ENCODE measurements at regions of chr1 and their contacts with region 1.

Region 1: DNA sequence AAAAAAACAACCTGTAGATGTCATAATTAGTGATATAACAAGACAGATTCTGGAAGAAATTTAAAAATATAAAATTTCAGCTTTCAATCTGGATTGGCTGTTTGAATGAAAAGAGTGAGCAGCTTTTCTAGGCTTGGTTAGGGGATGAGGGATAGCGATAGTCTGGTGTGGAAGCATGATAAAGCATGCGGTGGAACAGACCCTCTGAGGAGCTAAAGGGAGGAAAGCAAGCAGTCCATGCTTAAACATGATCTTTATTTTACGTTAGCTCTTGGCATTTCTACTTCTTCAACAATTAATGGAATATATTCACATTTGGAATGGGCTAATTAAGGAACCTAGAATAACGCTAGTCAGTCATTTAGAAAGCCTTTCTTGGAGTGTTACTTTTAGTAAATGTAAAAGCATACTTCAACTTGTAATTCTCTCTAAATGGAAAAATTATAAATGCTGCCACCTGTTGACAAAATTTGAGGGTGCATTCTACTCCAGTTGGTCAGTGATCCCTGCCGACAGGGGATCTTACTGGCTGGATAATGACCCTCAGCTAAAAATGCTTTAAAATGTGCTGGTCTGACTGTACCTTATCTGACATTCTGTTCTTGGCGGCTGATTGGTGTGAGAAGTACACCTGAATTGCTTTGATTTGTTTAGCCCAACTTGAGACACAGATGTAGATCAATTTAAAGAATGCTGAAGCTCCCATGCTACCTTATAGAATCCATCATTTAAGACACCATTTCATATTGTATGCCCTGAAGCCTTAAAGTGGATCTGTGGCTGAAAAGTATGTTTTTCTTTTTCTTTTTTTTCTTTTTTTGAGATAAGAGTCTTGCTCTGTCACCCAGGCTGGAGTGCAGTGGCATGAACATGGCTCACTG is 61.2 kb downstream of the AK4 start:
- DNase-seq: peak; percentile 38
- ATAC-seq: peak; percentile 68
- H3K4me3 ChIP-seq: no peak overlapping the region
- H3K27ac ChIP-seq: peak overlapping the region; percentile 43
- H3K4me1 ChIP-seq: peaks cover 30% of the 10 kb centered on the region
- H3K27me3 ChIP-seq: no peaks in the 10 kb centered on the region
- CTCF ChIP-seq: peak; percentile 56
- EP300 ChIP-seq: no peak
- POLR2A ChIP-seq: no peak
- RAD21 ChIP-seq: 0 out of 2 replicates have a peak, but pooled peaks have one; percentile 34

Region 2: DNA sequence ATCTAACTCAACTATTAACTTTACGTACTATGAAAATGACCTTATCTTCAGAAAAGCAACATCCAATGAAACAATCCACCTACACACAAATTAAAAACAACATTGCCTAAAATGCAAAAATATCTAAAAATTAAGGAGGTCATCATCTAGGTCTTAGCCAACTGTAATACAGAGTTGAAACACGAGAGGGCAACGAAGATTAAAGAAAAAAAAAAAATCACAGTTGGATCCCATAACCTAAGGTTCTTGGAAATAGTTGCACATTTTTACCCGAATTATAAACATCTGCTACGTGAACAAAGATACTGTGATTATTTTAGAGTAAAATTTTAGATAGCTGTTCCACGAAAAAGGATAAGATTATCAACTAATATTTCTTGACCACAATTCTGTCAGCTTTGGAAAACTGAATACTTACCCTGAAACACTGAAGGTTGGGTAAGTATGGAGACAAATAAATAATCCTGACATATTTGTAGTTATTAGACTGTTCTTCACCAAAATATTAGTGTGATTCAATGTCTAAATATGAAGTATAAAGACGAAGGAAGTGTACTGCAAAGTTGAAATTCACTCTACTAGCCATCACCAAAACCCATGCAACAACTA is 149.2 kb before region 1 on chr1:
- CTCF ChIA-PET with region 1: interaction called, 10 read pairs
- POLR2A ChIA-PET with region 1: no interaction called
- in situ Hi-C with region 1: loop called (anchors 5 kb)
- intact Hi-C with region 1: loop called (anchors 1 kb)
- DNase-seq: peak; percentile 17
- ATAC-seq: 0 out of 3 replicates have a peak, but pooled peaks have one; percentile 25
- H3K4me3 ChIP-seq: no peak overlapping the region
- H3K27ac ChIP-seq: no peak overlapping the region
- H3K4me1 ChIP-seq: no peaks in the 10 kb centered on the region
- H3K27me3 ChIP-seq: no peaks in the 10 kb centered on the region
- CTCF ChIP-seq: peak; percentile 48
- EP300 ChIP-seq: no peak
- POLR2A ChIP-seq: no peak
- RAD21 ChIP-seq: peak; percentile 47; the same call in 1 of the 2 replicates

Region 3: GRCh38 chr1:65067491-65068201 is 141.6 kb before region 1 on chr1:
- CTCF ChIA-PET with region 1: interaction called, 5 read pairs
- POLR2A ChIA-PET with region 1: no interaction called
- in situ Hi-C with region 1: loop called (anchors 5 kb)
- intact Hi-C with region 1: no loop called
- DNase-seq: peak; percentile 29
- ATAC-seq: peak; percentile 49
- H3K4me3 ChIP-seq: peak overlapping the region; percentile 64 to 84 (median 74)
- H3K27ac ChIP-seq: peak overlapping the region; percentile 26
- H3K4me1 ChIP-seq: peaks cover 14% of the 10 kb centered on the region; the same call in 1 of the 2 replicates
- H3K27me3 ChIP-seq: peaks cover 0 to 8% of the 10 kb centered on the region in 2 experiments; a peak in 2 of 5 replicates
- CTCF ChIP-seq: no peak
- EP300 ChIP-seq: no peak
- POLR2A ChIP-seq: peak in 1 of 2 experiments; percentile 54; a peak in 2 of 4 replicates
- RAD21 ChIP-seq: no peak

Region 4: DNA sequence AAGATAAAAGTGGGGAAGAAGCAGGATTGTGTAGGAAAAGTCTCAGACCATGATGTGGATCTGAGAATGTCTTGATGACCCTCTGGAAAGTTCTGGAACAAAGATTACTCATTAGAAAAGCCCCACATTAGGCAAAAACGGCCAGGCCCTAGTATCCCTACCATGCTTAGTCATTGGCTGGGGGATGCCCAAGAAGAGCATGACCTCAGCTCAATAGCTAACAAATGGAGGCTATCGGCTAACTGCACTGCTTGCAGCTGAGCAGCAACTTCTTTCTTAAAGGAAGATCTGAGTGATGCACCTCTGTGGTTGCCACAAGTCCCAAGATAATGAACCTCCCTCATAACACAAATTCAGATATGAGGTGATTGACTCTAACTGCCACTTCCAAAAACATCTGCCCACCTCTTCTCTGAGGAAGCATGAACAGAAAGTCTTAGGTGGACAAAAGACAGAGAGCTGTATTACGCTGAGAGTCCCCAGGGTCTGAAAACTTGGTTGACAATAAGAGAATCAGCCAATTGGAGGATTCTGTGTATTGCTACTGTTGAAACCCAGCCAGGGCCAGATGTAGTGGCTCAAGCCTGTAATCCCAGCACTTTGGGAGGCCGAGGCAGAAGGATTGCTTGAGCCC is 125.9 kb before region 1 on chr1:
- CTCF ChIA-PET with region 1: no interaction called
- POLR2A ChIA-PET with region 1: no interaction called
- in situ Hi-C with region 1: no loop called
- intact Hi-C with region 1: loop called (anchors 5 kb)
- DNase-seq: no peak
- ATAC-seq: no peak
- H3K4me3 ChIP-seq: no peak overlapping the region
- H3K27ac ChIP-seq: no peak overlapping the region
- H3K4me1 ChIP-seq: no peaks in the 10 kb centered on the region; the same call in 1 of the 2 replicates
- H3K27me3 ChIP-seq: no peaks in the 10 kb centered on the region
- CTCF ChIP-seq: no peak
- EP300 ChIP-seq: no peak
- POLR2A ChIP-seq: no peak
- RAD21 ChIP-seq: no peak

Region 5: DNA sequence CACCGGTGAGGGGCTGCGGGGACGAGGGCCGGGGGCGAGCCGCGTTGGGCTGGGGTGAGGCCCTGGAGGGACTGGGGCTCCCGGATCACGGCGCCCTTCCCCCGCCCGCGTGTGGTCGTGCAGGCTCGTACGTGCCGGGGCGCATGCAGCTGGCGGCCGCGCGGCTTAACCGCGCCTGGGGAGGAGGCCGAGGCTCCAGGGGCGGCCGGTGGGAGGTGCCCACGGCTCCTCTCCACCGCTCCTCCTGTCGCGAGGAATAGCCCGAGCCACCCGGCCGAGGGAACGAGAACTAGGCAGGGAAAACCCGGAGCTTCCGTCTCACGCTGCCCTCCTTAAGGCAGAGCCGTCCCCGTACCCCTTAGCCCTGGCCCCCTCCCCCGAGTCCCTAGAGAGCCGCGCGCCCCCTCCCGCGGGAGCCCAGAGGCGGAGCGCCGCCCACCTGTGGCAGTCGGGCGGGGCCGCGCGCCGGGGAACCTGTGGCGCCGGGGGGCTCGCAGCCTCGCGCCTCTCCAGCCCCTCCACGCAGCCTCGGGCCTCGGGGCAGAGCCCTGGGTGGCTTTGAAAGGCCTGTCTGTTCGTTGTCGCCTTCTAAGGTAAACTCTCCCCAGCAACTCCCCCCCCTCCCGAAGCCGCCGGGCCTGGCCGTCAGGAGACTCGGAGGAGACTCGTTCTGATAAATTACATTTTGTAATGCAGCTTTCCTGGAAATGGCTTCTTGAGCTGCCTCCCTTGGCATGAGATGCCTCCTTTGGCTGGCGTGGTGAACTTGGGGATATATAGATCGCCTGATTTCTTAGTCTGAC is 60.5 kb before region 1 on chr1:
- CTCF ChIA-PET with region 1: no interaction called
- POLR2A ChIA-PET with region 1: no interaction called
- in situ Hi-C with region 1: loop called (anchors 5 kb)
- intact Hi-C with region 1: loop called (anchors 2 kb)
- DNase-seq: no peak
- ATAC-seq: peak; percentile 41
- H3K4me3 ChIP-seq: peak overlapping the region; percentile 75 to 90 (median 86)
- H3K27ac ChIP-seq: peak overlapping the region; percentile 78
- H3K4me1 ChIP-seq: peaks cover 69% of the 10 kb centered on the region
- H3K27me3 ChIP-seq: no peaks in the 10 kb centered on the region; a peak in 1 of 5 replicates
- CTCF ChIP-seq: 0 out of 2 replicates have a peak, but pooled peaks have one; percentile 3
- EP300 ChIP-seq: no peak
- POLR2A ChIP-seq: peak in 1 of 2 experiments; percentile 49; a peak in 2 of 4 replicates
- RAD21 ChIP-seq: no peak; the same call in 1 of the 2 replicates

Region 6: DNA sequence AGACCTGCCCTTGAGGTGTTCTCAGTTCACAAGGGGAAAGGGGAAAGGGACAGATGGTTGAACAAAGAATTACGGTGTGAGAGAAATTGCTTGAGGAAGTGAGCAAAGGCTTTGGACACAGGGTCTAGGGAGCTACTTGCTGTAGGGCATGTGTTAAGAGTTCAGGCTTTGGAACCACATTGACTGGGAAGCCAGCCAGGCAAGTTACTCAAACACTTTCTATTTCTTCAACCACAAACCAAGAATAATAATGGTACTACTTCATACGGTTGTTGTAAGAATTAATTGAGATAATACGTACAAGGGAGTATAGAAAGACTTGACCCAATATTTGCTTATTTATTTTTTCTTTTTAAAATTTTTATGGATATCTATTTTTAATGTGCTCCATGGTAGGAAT is 34.7 kb before region 1 on chr1:
- CTCF ChIA-PET with region 1: no interaction called
- POLR2A ChIA-PET with region 1: interaction called, 3 read pairs
- in situ Hi-C with region 1: no loop called
- intact Hi-C with region 1: loop called (anchors 5 kb)
- DNase-seq: no peak
- ATAC-seq: no peak
- H3K4me3 ChIP-seq: no peak overlapping the region
- H3K27ac ChIP-seq: no peak overlapping the region
- H3K4me1 ChIP-seq: peaks cover 85% of the 10 kb centered on the region
- H3K27me3 ChIP-seq: no peaks in the 10 kb centered on the region
- CTCF ChIP-seq: no peak
- EP300 ChIP-seq: no peak
- POLR2A ChIP-seq: no peak
- RAD21 ChIP-seq: no peak